Motor neuron (in vitro differentiated cells): ENCODE measurements at regions of chr17 and their contacts with region 1.

Region 1: GRCh38 chr17:73249700-73250099 is 12.0 kb downstream of the CPSF4L start:
- ATAC-seq: no peak
- H3K4me3 ChIP-seq: no peak overlapping the region
- H3K27ac ChIP-seq: no peak overlapping the region
- H3K4me1 ChIP-seq: peaks cover 0 to 7% of the 10 kb centered on the region in 2 donors

Region 2: DNA sequence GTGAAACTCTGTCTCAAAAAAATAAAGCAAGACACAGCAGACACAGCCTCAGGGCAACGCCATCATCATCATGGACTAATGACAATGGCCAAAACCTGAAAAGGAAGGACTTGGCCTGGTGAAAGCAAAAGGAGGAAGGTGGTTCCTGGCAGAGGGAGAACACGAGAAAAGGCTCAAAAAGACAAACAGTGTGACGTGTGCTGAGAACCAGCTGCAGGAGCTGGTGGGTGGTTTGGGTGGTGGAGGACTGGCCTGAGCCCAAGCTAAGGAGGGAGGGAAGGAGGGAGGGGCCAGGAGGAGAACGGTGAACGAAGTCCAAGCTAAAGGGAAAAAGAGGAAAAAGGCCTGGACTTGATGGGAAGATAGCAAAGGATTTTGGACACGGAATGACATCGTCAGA is 242.3 kb before region 1 on chr17:
- in situ Hi-C with region 1: no loop called
- ATAC-seq: no peak
- H3K4me3 ChIP-seq: no peak overlapping the region
- H3K27ac ChIP-seq: no peak overlapping the region
- H3K4me1 ChIP-seq: no peaks in the 10 kb centered on the region

Region 3: DNA sequence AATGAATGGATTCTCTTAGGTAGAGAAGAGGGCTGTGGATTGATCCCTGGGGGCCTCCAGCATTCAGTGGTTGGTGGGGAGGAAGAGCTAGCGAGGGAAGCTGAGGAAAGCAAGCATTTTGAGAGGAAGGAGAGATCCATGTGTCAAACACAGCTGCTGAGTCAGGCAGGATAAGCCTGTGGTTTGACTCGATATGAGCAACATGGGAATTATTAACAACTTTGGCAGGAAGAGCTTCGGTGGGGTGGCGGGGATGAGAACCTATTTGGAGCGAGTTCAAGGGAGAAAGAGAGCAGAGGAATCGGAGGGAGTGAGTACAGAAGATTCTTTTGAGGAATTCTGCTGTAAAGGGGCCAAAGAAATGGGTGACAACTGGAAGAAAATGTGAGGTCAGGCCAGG is 121.6 kb after region 1 on chr17:
- in situ Hi-C with region 1: loop called in 6 of 9 experiments (anchors 5 to 25 kb)
- ATAC-seq: no peak
- H3K4me3 ChIP-seq: no peak overlapping the region
- H3K27ac ChIP-seq: no peak overlapping the region
- H3K4me1 ChIP-seq: peaks cover 5 to 7% of the 10 kb centered on the region in 2 donors

Region 4: GRCh38 chr17:73595479-73595878 is 345.8 kb after region 1 on chr17:
- in situ Hi-C with region 1: no loop called
- ATAC-seq: peak; percentile 63 to 85 (median 82)
- H3K4me3 ChIP-seq: no peak overlapping the region
- H3K27ac ChIP-seq: no peak overlapping the region
- H3K4me1 ChIP-seq: peaks cover 31 to 50% of the 10 kb centered on the region in 2 donors